ENCODE measurements at regions of chr12 and their contacts with region 1.

Region 1: DNA sequence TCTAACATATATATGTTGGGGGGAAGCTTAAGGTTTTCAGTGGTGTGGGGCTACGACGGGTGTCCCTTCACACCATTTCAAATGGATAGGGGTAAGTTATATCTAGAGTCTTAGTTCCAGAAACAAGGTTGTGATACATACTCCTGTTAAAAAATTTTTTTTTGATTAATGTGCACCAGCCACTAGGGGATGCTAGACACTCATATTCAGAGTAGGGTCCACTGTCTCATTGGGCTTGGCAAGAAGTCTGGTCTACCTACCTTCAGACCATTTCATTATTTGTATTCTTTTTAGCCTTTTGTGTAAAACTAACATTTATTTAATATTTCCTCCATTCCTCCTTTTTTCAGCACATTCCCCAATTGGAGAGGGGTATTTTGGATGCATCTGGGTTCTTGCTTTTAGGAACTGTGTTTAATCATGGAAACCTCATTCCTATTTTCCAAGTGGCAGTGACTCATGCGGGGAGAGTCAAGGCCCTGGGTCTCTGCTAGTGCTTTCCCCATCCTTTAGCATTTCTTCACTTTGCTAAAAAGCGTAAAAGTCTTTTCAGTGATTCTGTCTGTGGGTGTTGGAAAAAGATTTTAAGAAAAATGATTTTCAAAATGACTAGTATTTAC is 33.4 kb downstream of the ANO4 start:
- DNase-seq: peak; percentile 43
- H3K4me3 ChIP-seq: no peak overlapping the region
- H3K27ac ChIP-seq: no peak overlapping the region
- H3K4me1 ChIP-seq: peaks cover 3% of the 10 kb centered on the region
- H3K27me3 ChIP-seq: no peaks in the 10 kb centered on the region
- CTCF ChIP-seq: peak; percentile 93 to 95

Region 2: DNA sequence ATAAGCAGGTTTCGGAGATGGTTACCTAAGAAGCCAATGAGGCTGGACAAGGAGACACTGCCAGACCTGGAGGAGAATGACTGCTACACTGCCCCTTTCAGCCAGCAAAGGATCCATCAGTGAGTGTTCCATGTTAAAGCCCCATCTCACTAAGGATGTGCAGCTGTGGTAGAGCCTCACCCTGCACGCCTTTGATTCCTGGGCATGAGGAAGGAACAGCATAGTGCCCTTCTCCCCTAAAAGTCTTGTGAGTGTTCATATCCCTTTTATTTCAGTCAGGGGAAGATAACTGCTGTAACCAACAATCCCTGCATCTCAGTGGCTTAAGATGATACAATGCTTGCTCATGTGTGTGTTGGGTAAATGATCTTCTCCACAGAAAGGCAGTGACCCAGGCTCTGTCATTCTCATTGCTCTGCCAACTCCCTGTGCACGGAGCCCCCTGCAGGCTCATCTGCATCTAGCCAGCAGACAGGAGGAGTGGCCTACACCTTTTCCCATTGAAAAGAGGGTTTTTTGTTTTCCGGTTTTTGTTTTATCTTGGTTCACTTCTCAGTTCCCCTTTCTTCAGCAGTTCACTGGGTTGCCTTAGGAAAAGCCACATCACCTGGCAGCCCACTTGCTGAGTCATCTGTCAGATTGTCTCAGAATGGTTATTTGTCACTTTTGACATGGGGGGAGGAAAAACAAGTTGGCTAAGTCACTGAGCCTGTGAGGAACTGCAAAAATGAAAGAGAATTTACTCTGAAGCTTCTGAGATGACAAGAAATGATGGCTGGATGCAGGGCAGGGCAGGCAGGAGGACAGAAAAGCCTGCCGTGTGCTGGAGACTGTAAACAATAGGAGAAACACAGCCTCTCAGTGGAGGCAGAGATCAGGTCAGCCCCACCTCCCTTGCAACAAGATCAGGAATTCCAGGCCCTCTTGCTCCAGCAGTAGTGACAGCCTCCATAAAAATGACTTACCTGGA is 159.8 kb after region 1 on chr12:
- CTCF ChIA-PET with region 1: no interaction called
- dilution Hi-C with region 1: no loop called
- in situ Hi-C with region 1: no loop called
- intact Hi-C with region 1: loop called (anchors 2 kb)
- DNase-seq: peak; percentile 48
- H3K4me3 ChIP-seq: no peak overlapping the region
- H3K27ac ChIP-seq: no peak overlapping the region
- H3K4me1 ChIP-seq: no peaks in the 10 kb centered on the region
- H3K27me3 ChIP-seq: no peaks in the 10 kb centered on the region
- CTCF ChIP-seq: peak; percentile 42 to 56

Region 3: DNA sequence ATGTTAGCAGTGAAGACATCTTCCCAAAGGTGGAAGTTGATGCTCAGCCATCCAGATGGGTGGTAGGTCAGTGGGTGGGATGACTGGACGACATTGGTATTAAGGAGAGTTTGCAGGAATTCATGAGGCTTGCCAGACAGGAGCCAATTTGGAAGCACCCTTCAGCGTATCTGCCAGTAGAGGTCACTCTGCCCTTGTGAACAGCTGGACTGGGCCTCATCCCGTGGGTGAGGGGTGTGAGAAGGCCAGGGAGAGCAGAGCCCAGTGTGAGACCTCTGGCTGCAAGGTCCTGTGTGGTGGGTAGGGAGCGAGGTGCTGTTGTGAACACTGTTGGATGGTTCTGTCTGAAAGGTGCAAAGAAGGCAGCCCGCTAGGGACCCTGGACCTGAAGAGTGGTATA is 344.3 kb after region 1 on chr12:
- CTCF ChIA-PET with region 1: no interaction called
- dilution Hi-C with region 1: no loop called
- in situ Hi-C with region 1: no loop called
- intact Hi-C with region 1: loop called (anchors 5 kb)
- DNase-seq: peak; percentile 11
- H3K4me3 ChIP-seq: no peak overlapping the region
- H3K27ac ChIP-seq: no peak overlapping the region
- H3K4me1 ChIP-seq: no peaks in the 10 kb centered on the region
- H3K27me3 ChIP-seq: no peaks in the 10 kb centered on the region
- CTCF ChIP-seq: peak in 1 of 2 donors; percentile 21

Region 4: DNA sequence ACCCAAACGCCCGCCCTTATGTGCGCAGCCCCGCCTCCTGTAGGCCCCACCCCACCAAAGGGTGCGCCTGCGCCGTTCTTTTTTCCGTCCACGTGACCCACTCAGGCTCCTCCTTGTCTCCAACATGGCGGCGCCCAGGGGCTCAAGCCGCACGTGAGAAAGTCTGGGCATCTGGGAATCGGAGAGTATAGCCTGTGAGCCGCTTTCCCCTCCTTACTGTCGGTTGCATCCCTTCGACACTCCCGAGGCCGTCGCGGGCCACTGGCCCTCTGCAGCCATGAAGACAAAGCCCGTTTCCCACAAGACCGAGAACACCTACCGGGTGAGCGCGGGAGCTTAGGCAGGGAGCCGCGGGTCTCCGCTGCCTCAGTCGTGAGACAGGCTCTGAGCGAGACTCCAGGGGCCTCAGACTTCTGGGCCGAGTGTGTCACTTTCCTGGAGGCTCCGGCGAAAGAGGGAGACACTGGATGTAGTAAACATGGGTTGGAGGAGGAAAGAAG is 452.0 kb after region 1 on chr12 and contains the start of gene UTP20:
- CTCF ChIA-PET with region 1: no interaction called
- dilution Hi-C with region 1: no loop called
- in situ Hi-C with region 1: no loop called
- intact Hi-C with region 1: loop called (anchors 5 kb)
- DNase-seq: peak; percentile 84
- H3K4me3 ChIP-seq: peak within 1 kb of the TSS; percentile 82 to 100 (median 99)
- H3K27ac ChIP-seq: peak within 1 kb of the TSS; percentile 78
- H3K4me1 ChIP-seq: no peaks in the 10 kb centered on the region
- H3K27me3 ChIP-seq: no peaks in the 10 kb centered on the region
- CTCF ChIP-seq: no peak
- total RNA-seq, gene UTP20: 19.2 to 21.2 TPM

Region 5: GRCh38 chr12:101299931-101300330 is 471.9 kb after region 1 on chr12:
- CTCF ChIA-PET with region 1: no interaction called
- dilution Hi-C with region 1: no loop called
- in situ Hi-C with region 1: loop called in 1 of 2 experiments (anchors 25 kb)
- intact Hi-C with region 1: no loop called
- DNase-seq: peak; percentile 37
- H3K4me3 ChIP-seq: no peak overlapping the region
- H3K27ac ChIP-seq: no peak overlapping the region
- H3K4me1 ChIP-seq: peaks cover 2% of the 10 kb centered on the region
- H3K27me3 ChIP-seq: no peaks in the 10 kb centered on the region
- CTCF ChIP-seq: no peak

Region 6: GRCh38 chr12:101323255-101323654 is 495.2 kb after region 1 on chr12:
- CTCF ChIA-PET with region 1: no interaction called
- dilution Hi-C with region 1: no loop called
- in situ Hi-C with region 1: loop called (anchors 10 to 25 kb)
- intact Hi-C with region 1: loop called (anchors 1 kb)
- DNase-seq: no peak
- H3K4me3 ChIP-seq: no peak overlapping the region
- H3K27ac ChIP-seq: no peak overlapping the region
- H3K4me1 ChIP-seq: no peaks in the 10 kb centered on the region
- H3K27me3 ChIP-seq: no peaks in the 10 kb centered on the region
- CTCF ChIP-seq: no peak

Region 7: DNA sequence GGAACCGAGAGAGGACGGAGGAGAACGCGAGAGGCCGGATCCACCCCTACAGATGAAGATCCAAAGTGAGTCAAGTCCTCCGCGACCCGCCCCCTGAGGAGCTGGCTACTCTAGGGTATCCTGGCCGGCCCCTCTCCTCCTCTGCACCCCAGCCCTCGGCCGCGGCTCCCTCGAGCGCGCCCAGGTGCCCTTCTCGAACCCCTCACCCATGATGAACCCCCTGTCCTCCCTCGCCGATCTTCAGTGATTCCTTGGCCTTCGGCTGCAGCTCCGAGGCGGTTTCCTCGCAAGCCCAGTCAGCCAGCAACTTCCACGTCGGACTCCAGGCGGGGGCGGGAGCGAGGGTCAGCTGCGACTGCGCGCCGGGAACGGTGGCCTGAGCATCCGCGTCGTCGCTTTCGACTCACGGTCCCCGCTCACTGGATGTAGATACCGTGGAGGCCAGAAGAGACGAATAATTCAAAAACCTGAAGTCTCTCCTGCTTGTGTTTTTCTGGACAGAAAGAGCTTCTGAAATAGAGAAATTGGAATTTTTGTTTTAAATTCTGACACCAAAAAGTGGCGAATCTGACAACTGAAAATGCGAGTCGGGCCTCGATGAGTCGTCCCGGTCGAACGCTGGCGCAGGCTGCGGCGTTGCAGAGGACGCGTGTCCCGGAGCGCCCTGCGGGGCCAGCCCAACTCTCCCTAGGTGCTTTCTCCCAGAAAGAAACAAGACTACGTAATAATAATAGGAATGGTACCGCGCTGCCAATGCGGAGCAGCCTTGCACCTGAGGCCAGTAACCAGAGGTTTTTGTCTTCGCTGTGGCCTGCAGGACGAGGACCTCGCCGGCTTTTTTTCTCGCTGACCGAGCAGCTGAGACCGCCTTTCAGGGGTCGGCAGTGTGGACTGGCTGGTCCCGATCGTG is 579.7 kb after region 1 on chr12 and contains the start of gene ARL1:
- CTCF ChIA-PET with region 1: no interaction called
- dilution Hi-C with region 1: no loop called
- in situ Hi-C with region 1: no loop called
- intact Hi-C with region 1: loop called (anchors 5 kb)
- DNase-seq: peak; percentile 88
- H3K4me3 ChIP-seq: peak within 1 kb of the TSS; percentile 72 to 99 (median 88)
- H3K27ac ChIP-seq: peak within 1 kb of the TSS; percentile 98
- H3K4me1 ChIP-seq: peaks cover 24% of the 10 kb centered on the region
- H3K27me3 ChIP-seq: no peaks in the 10 kb centered on the region
- CTCF ChIP-seq: no peak
- total RNA-seq, gene ARL1: 64.0 to 93.5 TPM